ENCODE measurements at regions of chr7 and their contacts with region 1.

Region 1: GRCh38 chr7:146090023-146090645 is 26.5 kb upstream of the CNTNAP2 start:
- DNase-seq: peak; percentile 58
- H3K4me3 ChIP-seq: peak overlapping the region in 1 of 2 experiments; percentile 2; a peak in 1 of 4 replicates
- H3K27ac ChIP-seq: no peak overlapping the region
- H3K4me1 ChIP-seq: no peaks in the 10 kb centered on the region
- H3K27me3 ChIP-seq: no peaks in the 10 kb centered on the region
- CTCF ChIP-seq: peak; percentile 95
- EP300 ChIP-seq: no peak
- RAD21 ChIP-seq: peak; percentile 79

Region 2: DNA sequence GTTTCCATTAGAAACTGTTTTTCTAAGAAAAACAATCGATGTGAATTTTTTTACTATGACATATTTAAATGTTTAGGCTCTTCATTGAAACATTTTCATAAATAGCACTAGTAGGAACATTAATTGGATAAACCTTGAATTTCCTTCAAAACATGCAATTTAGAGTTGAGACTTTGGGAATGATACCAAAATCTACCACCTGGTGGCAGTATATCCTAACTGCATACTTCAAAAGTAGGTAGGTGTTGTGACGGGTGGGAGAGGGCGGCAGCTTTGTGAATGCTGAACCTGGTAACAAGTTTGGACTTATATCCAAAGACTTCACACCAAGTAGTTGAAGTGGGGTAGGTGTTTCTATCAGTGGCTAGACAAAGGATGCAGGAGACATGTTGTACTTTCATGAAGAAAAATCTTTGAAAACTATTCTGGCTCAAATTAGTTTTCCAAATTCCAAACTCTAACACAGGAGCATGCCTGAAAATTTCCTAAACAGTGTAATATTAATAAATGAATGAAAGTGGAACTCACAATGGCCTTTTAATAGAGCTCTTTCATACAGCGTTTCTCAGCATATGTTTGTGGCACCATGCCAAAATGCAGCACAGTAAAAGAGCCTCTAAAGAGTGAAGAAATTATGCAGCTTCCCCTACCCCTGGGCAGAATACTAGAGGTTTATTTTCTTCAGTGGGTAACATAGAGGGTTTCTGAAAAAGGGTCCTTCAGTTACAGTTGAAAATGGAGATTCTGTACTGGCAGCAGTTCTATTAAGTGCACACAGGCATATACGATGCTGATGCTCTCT is 1053.3 kb before region 1 on chr7:
- CTCF ChIA-PET with region 1: interaction called, 23 read pairs
- POLR2A ChIA-PET with region 1: no interaction called
- DNase-seq: peak; percentile 44
- H3K4me3 ChIP-seq: peak overlapping the region in 1 of 2 experiments; percentile 9; a peak in 1 of 4 replicates
- H3K27ac ChIP-seq: no peak overlapping the region
- H3K4me1 ChIP-seq: no peaks in the 10 kb centered on the region
- H3K27me3 ChIP-seq: no peaks in the 10 kb centered on the region
- CTCF ChIP-seq: peak; percentile 95
- EP300 ChIP-seq: no peak
- RAD21 ChIP-seq: peak; percentile 77

Region 3: GRCh38 chr7:145845345-145845744 is 244.8 kb before region 1 on chr7:
- CTCF ChIA-PET with region 1: no interaction called
- POLR2A ChIA-PET with region 1: no interaction called
- DNase-seq: no peak
- H3K4me3 ChIP-seq: no peak overlapping the region
- H3K27ac ChIP-seq: no peak overlapping the region
- H3K4me1 ChIP-seq: no peaks in the 10 kb centered on the region
- H3K27me3 ChIP-seq: no peaks in the 10 kb centered on the region
- CTCF ChIP-seq: no peak
- EP300 ChIP-seq: no peak
- RAD21 ChIP-seq: no peak

Region 4: DNA sequence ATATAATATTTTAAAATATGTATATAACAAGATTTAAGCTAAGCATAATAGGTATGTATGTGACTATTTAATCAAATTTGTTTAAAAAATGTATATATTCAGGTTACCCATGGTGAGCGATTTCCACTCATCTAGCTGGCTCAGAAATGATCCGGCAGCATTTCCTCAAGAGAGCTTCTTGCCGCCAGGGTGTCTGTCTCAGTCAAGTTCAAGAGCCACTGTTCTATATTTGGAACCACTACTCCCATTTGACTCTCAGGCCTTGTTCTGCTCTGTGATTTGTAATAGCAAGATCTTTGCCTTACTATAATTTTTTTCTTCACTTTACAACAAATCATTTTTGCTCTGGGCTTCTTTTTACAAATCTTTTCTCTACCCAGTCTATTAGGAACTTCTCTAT is 22.3 kb before region 1 on chr7:
- CTCF ChIA-PET with region 1: interaction called, 21 read pairs
- POLR2A ChIA-PET with region 1: no interaction called
- DNase-seq: no peak
- H3K4me3 ChIP-seq: no peak overlapping the region
- H3K27ac ChIP-seq: no peak overlapping the region
- H3K4me1 ChIP-seq: no peaks in the 10 kb centered on the region
- H3K27me3 ChIP-seq: no peaks in the 10 kb centered on the region
- CTCF ChIP-seq: no peak
- EP300 ChIP-seq: no peak
- RAD21 ChIP-seq: no peak

Region 5: GRCh38 chr7:146074195-146074765 is 15.9 kb before region 1 on chr7:
- CTCF ChIA-PET with region 1: interaction called, 39 read pairs
- POLR2A ChIA-PET with region 1: no interaction called
- DNase-seq: no peak
- H3K4me3 ChIP-seq: no peak overlapping the region
- H3K27ac ChIP-seq: no peak overlapping the region
- H3K4me1 ChIP-seq: no peaks in the 10 kb centered on the region
- H3K27me3 ChIP-seq: no peaks in the 10 kb centered on the region; the same call in 1 of the 2 replicates
- CTCF ChIP-seq: no peak
- EP300 ChIP-seq: no peak
- RAD21 ChIP-seq: no peak

Region 6: GRCh38 chr7:146115851-146116520 is 25.9 kb after region 1 on chr7:
- CTCF ChIA-PET with region 1: interaction called, 27 read pairs
- POLR2A ChIA-PET with region 1: no interaction called
- DNase-seq: peak; percentile 86
- H3K4me3 ChIP-seq: peak overlapping the region; percentile 65 to 86
- H3K27ac ChIP-seq: peak overlapping the region; percentile 54 to 56
- H3K4me1 ChIP-seq: peaks cover 0 to 13% of the 10 kb centered on the region in 2 experiments; a peak in 2 of 4 replicates
- H3K27me3 ChIP-seq: no peaks in the 10 kb centered on the region
- CTCF ChIP-seq: peak; percentile 23
- EP300 ChIP-seq: no peak
- RAD21 ChIP-seq: no peak; the same call in 1 of the 2 replicates

Region 7: DNA sequence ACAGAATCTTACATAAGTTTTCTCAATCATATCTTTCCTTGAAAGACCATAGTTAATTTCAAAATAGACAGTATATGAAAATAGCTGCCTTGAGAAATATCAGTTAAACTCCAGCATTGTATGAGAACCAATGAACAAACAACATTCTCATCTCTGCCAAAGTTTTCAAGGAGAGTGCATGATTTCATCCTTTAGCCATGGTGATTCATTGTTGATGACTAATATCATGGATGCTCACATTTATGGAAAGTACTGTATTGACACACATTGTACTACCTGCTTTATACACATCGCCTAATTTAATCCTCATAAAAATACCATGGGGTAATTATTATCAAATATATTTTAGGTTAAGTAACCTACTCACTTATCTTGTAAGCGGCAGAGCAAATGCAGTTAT is 276.8 kb after region 1 on chr7:
- CTCF ChIA-PET with region 1: no interaction called
- POLR2A ChIA-PET with region 1: no interaction called
- DNase-seq: no peak
- H3K4me3 ChIP-seq: no peak overlapping the region
- H3K27ac ChIP-seq: peak overlapping the region in 1 of 2 experiments; percentile 74; a peak in 1 of 4 replicates
- H3K4me1 ChIP-seq: no peaks in the 10 kb centered on the region; a peak in 2 of 4 replicates
- H3K27me3 ChIP-seq: no peaks in the 10 kb centered on the region
- CTCF ChIP-seq: no peak
- EP300 ChIP-seq: no peak
- RAD21 ChIP-seq: no peak